PC-3 (cell line): ENCODE measurements at regions of chr20 and their contacts with region 1.

Region 1: GRCh38 chr20:2920473-2920872 is 47.2 kb downstream of the PTPRA start:
- DNase-seq: peak; percentile 56
- ATAC-seq: peak; percentile 48
- H3K4me3 ChIP-seq: peak overlapping the region; percentile 3; the same call in 1 of the 2 replicates
- H3K27ac ChIP-seq: peak overlapping the region; percentile 61
- H3K4me1 ChIP-seq: peaks cover 26% of the 10 kb centered on the region
- H3K27me3 ChIP-seq: no peaks in the 10 kb centered on the region
- CTCF ChIP-seq: 0 out of 2 replicates have a peak, but pooled peaks have one; percentile 13

Region 2: GRCh38 chr20:2879146-2879545 is 41.3 kb before region 1 on chr20:
- CTCF ChIA-PET with region 1: interaction called, 15 read pairs
- POLR2A ChIA-PET with region 1: no interaction called
- intact Hi-C with region 1: no loop called
- DNase-seq: peak; percentile 50
- ATAC-seq: peak; percentile 72
- H3K4me3 ChIP-seq: no peak overlapping the region
- H3K27ac ChIP-seq: no peak overlapping the region
- H3K4me1 ChIP-seq: peaks cover 17% of the 10 kb centered on the region
- H3K27me3 ChIP-seq: no peaks in the 10 kb centered on the region
- CTCF ChIP-seq: no peak

Region 3: GRCh38 chr20:3174442-3175261 is 254.2 kb after region 1 on chr20:
- CTCF ChIA-PET with region 1: no interaction called
- POLR2A ChIA-PET with region 1: no interaction called
- intact Hi-C with region 1: no loop called
- DNase-seq: peak; percentile 55
- ATAC-seq: peak; percentile 55
- H3K4me3 ChIP-seq: peak overlapping the region; percentile 92
- H3K27ac ChIP-seq: no peak overlapping the region
- H3K4me1 ChIP-seq: peaks cover 12% of the 10 kb centered on the region
- H3K27me3 ChIP-seq: no peaks in the 10 kb centered on the region
- CTCF ChIP-seq: no peak

Region 4: DNA sequence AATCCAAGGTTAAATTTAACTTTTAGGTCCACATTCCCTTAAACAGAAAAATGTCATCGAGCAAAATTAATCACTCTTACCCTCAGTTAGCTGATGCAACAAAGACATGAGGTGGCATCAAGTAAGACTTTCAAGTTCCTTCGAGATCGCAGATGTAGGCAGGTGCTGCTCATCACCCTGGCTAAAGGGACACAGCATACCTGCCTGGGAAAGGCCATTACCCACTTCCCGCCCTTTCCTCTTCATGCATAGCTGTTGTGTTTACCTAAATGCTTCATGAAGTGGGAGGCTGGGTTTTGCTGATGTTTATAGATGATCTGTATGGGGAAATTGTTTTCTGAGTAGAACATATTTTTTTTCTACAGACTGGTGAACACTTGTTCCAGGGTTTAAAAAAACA is 675.1 kb after region 1 on chr20:
- CTCF ChIA-PET with region 1: no interaction called
- POLR2A ChIA-PET with region 1: no interaction called
- intact Hi-C with region 1: no loop called
- DNase-seq: no peak
- ATAC-seq: peak; percentile 43; the same call in 1 of the 2 replicates
- H3K4me3 ChIP-seq: no peak overlapping the region
- H3K27ac ChIP-seq: no peak overlapping the region
- H3K4me1 ChIP-seq: no peaks in the 10 kb centered on the region
- H3K27me3 ChIP-seq: no peaks in the 10 kb centered on the region
- CTCF ChIP-seq: no peak